Right ventricle myocardium inferior (tissue), 1 donor: ENCODE measurements at regions of chr1 and their contacts with region 1.

Region 1: GRCh38 chr1:193183019-193183627 is 3.3 kb downstream of the B3GALT2 start:
- DNase-seq: no peak
- ATAC-seq: no peak

Region 2: GRCh38 chr1:193013005-193013404 is 170.1 kb before region 1 on chr1:
- intact Hi-C with region 1: no loop called
- DNase-seq: no peak
- ATAC-seq: peak; percentile 72

Region 3: DNA sequence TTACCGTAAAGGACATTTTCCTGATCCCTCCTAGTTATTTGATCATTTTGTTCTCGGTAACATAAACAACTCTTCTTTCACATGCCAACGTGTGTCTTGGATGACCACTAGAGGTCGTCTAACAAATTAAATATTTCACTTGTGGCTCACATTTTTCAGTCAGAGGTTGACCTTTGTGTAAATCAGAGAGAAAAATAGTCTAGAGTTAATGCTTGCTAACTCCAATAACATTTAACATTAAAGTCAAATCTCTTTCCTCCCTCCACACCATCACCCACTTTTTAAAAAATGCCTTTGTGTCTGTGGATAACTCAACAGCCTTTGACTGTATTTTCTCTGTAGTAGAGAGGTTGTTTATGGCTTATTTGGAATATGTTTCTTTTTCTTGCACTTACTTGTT is 223.8 kb after region 1 on chr1:
- intact Hi-C with region 1: loop called (anchors 5 kb)
- DNase-seq: no peak
- ATAC-seq: no peak

Region 4: GRCh38 chr1:193685986-193686385 is 502.9 kb after region 1 on chr1:
- intact Hi-C with region 1: loop called (anchors 10 kb)
- DNase-seq: no peak
- ATAC-seq: no peak

Region 5: GRCh38 chr1:194295685-194296084 is 1112.6 kb after region 1 on chr1:
- intact Hi-C with region 1: loop called (anchors 5 kb)
- DNase-seq: no peak
- ATAC-seq: peak; percentile 64